ENCODE measurements at regions of chr1 and their contacts with region 1.

Region 1: DNA sequence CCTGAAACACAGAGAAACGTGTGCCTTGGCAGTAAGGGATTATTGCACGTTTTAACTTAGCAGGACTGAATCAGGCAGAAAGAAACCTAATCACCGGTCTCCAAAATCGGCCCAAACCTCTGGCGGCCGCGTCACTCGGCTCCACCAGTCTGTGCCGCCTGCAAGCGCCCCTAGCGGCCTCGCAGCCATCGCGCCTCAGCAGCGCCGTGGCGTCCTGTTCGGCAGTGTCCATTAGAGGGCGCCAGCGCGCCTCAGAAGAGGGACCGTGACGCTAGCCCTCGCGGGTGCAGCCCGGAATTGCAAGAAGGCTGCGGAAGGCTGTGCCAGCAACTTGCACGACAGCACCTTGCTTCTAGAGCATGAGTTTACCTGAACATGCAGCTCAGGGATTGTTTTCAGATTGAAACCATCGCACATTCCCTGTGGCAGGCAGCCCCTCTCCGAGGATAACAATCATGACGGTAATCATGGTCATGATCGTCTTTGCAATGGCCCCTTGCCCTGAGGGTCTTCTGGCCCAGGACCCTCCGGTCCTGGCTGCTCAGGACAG is 164.4 kb downstream of the TRIM33 start:
- DNase-seq: peak; percentile 97

Region 2: GRCh38 chr1:114428083-114428749 is 81.7 kb after region 1 on chr1:
- intact Hi-C with region 1: loop called (anchors 5 kb)
- DNase-seq: no peak

Region 3: GRCh38 chr1:114511032-114511785 is 164.7 kb after region 1 on chr1 and contains the start of gene TRIM33:
- intact Hi-C with region 1: loop called (anchors 2 kb)
- DNase-seq: peak; percentile 96
- total RNA-seq, gene TRIM33: 23.4 TPM

Region 4: DNA sequence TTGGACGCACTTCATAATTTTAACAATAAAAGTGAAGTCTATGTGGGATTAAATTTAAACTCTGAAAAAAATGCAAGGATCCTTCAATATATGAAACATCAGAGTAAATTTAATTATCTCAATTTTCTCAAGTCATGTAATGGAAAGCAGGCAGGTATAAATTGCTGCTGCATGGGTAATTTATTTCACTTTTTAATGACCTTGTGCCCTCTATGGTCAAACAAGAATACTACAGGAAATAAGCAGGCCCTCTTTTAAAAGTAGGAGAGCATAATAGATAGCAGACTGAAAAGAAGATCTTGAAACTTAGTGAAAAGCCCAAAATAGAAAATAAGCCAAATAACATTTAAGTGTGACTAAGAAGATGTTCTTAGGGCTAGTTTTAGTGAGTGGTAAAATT is 212.0 kb after region 1 on chr1:
- intact Hi-C with region 1: loop called (anchors 2 kb)
- DNase-seq: no peak

Region 5: GRCh38 chr1:114581335-114582287 is 235.1 kb after region 1 on chr1 and contains the start of gene BCAS2:
- intact Hi-C with region 1: loop called (anchors 5 kb)
- DNase-seq: peak; percentile 97
- total RNA-seq, gene BCAS2: 36.1 TPM

Region 6: DNA sequence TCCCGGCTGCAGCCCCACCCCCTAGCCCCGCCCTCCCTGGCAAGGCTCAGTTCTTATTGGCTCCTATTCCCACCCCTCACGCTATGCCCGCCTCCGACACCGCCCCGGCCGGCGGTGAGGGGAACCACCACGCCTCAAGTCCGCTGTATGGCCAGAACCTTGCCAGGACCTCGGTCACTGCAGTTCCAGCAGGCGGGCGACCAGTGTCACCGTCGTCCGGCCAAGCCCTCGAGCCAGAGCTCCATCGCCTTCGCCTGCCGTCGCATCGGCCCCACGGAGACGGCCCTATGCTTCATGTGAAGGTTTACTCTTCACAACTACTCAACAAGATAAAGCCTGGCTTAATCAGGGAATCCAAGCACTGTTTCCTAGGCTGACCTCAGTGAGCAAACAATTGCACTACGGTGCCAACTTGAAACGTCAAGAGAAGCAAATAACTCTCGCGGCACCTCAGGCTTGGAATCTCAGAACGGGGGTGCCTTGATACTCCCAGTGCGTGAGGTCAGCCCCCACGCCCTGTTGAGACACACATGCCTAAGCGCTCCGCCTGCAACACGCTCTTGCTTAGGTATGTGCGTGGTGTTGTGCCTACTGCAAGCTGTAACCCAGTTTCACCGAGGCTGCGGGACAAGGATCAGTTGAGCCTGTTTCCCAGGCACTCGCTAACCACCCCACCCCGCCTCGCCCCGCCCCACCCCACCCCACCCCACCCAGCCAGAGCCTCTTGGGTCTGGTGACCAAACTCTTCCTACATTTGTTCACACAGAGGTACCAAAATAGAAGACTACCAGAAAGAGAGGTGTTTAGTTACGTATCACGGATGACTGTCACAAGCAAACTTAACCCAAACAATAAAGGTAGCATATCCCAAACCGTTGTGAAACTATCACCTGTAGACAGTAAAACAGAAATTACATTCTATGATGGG is 323.8 kb after region 1 on chr1:
- intact Hi-C with region 1: loop called (anchors 10 kb)
- DNase-seq: peak; percentile 97

Measured in cardiac septum (tissue), 1 donor.